ENCODE measurements at regions of chrX and their contacts with region 1.

Region 1: DNA sequence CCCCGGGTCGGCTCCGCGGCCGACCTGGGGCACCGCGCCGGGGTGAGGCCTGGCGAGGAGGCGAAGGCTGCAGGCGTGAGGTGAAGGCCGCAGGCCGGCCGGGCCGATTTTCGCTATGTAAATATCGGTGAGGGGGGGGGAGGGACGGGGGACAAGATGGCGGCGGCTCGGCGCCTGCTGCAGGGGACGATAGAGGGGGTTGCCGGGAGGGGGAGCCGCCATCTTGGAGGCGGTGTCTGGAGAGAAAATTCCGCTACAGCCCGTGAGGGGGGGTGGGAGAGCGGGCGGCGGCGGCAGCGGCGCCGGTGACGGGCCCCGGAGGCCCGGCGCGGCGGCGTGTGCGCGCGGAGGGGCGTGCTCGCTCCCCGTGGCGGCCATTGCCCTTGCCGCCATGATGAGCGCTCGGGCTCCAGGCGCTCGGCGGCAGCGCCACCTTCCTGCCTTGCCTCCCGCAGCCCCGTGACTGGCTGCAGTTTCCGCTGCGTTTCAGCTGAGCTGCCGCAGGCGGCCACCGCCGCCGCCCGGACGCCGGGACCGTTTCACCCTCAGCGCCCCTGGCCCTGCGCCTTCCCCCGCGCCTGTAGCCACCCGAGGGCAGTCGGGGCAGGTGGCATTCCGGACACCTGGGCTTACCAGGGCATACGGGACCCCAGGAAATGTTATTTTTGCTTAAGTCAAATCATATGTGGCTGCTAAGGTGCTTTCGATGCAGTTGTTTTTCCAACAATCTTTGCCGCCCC is 692 bp downstream of the ZFX start:
- DNase-seq: peak; percentile 94
- ATAC-seq: peak; percentile 69
- H3K4me3 ChIP-seq: peak overlapping the region; percentile 61 to 90 (median 72)
- H3K4me3 Mint-ChIP-seq: peak overlapping the region; percentile 87
- H3K27ac ChIP-seq: peak overlapping the region; percentile 90 to 98
- H3K27ac Mint-ChIP-seq: peak overlapping the region; percentile 87
- H3K4me1 ChIP-seq: peaks cover 38 to 56% of the 10 kb centered on the region in 2 donors
- H3K4me1 Mint-ChIP-seq: peaks cover 50% of the 10 kb centered on the region
- H3K27me3 ChIP-seq: no peaks in the 10 kb centered on the region
- H3K27me3 Mint-ChIP-seq: no peaks in the 10 kb centered on the region
- CTCF ChIP-seq: peak; percentile 34

Region 2: DNA sequence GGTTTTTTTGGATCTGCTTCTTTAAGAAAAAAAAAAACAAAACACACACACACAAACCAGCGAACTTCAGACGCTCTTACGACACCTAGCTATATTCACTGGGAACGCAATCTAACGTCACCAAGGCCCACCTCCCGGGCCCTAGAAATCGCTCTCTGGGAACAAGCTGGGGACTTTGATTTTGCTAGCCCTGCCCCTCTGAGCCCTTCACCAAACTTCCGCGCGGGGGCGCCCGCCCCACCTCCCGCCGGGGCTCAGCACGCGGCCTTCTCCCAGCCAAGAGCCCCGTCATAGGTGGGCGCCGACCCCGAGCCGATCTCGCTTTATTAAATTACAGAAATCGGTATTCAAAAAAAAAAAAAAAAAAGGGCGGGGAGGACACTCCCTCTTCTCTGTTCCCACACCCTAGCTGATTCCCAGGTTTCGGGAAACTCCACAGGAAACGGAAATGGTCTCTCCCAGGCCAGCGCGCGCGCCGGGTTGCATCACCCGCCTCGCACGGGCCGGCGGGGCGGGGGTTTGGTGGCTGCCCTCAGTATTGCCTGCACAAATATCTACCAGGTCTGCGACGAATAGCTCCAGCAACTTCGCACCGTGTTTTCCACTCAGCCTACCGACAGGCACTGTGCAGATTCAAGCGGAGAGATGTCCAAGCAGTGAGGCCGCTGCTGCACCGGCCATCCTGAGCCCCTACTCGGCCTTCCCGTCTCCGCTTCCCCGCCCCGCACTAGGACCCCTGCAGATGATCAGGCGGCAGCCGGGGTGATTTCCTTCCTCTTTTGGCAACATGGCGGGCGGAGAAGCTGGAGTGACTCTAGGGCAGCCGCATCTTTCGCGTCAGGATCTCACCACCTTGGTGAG is 95.8 kb before region 1 on chrX and contains the start of gene EIF2S3:
- CTCF ChIA-PET with region 1: interaction called, 3 read pairs
- POLR2A ChIA-PET with region 1: interaction called, 10 read pairs
- intact Hi-C with region 1: loop called (anchors 1 kb)
- DNase-seq: peak; percentile 95
- ATAC-seq: peak; percentile 80
- H3K4me3 ChIP-seq: peak within 1 kb of the TSS; percentile 76 to 98 (median 89)
- H3K4me3 Mint-ChIP-seq: peak within 1 kb of the TSS; percentile 99
- H3K27ac ChIP-seq: no peak within 1 kb of the TSS
- H3K27ac Mint-ChIP-seq: peak within 1 kb of the TSS; percentile 100
- H3K4me1 ChIP-seq: no peaks in the 10 kb centered on the region
- H3K4me1 Mint-ChIP-seq: peaks cover 3% of the 10 kb centered on the region
- H3K27me3 ChIP-seq: no peaks in the 10 kb centered on the region
- H3K27me3 Mint-ChIP-seq: no peaks in the 10 kb centered on the region
- CTCF ChIP-seq: peak; percentile 71
- total RNA-seq, gene EIF2S3: 260 and 272 TPM in 2 replicates

Region 3: GRCh38 chrX:24110069-24110468 is 40.2 kb before region 1 on chrX:
- CTCF ChIA-PET with region 1: no interaction called
- POLR2A ChIA-PET with region 1: no interaction called
- intact Hi-C with region 1: no loop called
- DNase-seq: no peak
- ATAC-seq: no peak
- H3K4me3 ChIP-seq: no peak overlapping the region
- H3K4me3 Mint-ChIP-seq: no peak overlapping the region
- H3K27ac ChIP-seq: no peak overlapping the region
- H3K27ac Mint-ChIP-seq: no peak overlapping the region
- H3K4me1 ChIP-seq: no peaks in the 10 kb centered on the region
- H3K4me1 Mint-ChIP-seq: no peaks in the 10 kb centered on the region
- H3K27me3 ChIP-seq: no peaks in the 10 kb centered on the region
- H3K27me3 Mint-ChIP-seq: no peaks in the 10 kb centered on the region
- CTCF ChIP-seq: no peak

Region 4: GRCh38 chrX:24253469-24253868 is 103.2 kb after region 1 on chrX:
- CTCF ChIA-PET with region 1: no interaction called
- POLR2A ChIA-PET with region 1: no interaction called
- intact Hi-C with region 1: no loop called
- DNase-seq: no peak
- ATAC-seq: no peak
- H3K4me3 ChIP-seq: no peak overlapping the region
- H3K4me3 Mint-ChIP-seq: no peak overlapping the region
- H3K27ac ChIP-seq: no peak overlapping the region
- H3K27ac Mint-ChIP-seq: no peak overlapping the region
- H3K4me1 ChIP-seq: no peaks in the 10 kb centered on the region
- H3K4me1 Mint-ChIP-seq: no peaks in the 10 kb centered on the region
- H3K27me3 ChIP-seq: no peaks in the 10 kb centered on the region
- H3K27me3 Mint-ChIP-seq: peaks cover 9% of the 10 kb centered on the region
- CTCF ChIP-seq: no peak

Region 5: DNA sequence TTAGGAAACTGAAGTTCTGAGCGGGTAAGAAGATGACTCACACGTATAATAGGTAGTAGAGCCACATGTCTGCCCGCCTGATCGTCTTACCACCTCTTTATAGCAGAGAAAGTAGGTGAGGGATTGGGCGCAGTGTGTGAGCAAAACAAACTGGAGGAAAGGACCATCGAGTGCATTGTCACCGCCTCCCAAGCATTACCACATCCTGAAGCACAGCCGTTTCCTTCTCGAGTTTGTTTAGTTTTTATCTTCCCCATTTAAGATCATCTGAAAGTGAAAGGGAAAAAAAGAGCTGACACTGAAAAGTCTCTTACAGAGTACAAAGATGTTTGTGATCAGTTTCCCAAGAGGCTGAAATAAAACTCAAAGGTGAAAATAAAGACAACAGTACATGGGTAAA is 329.7 kb after region 1 on chrX:
- CTCF ChIA-PET with region 1: no interaction called
- POLR2A ChIA-PET with region 1: no interaction called
- intact Hi-C with region 1: loop called (anchors 5 kb)
- DNase-seq: peak; percentile 89
- ATAC-seq: peak; percentile 96
- H3K4me3 ChIP-seq: peak overlapping the region; percentile 31 to 62 (median 42)
- H3K4me3 Mint-ChIP-seq: peak overlapping the region; percentile 92
- H3K27ac ChIP-seq: peak overlapping the region; percentile 93 to 96
- H3K27ac Mint-ChIP-seq: peak overlapping the region; percentile 99
- H3K4me1 ChIP-seq: peaks cover 33 to 49% of the 10 kb centered on the region in 2 donors
- H3K4me1 Mint-ChIP-seq: peaks cover 62% of the 10 kb centered on the region
- H3K27me3 ChIP-seq: no peaks in the 10 kb centered on the region
- H3K27me3 Mint-ChIP-seq: no peaks in the 10 kb centered on the region
- CTCF ChIP-seq: no peak